ENCODE measurements at regions of chr19 and their contacts with region 1.

Region 1: GRCh38 chr19:34851353-34851752 is 75.3 kb upstream of the ZNF30 start:
- DNase-seq: peak; percentile 62 to 67
- H3K4me3 ChIP-seq: no peak overlapping the region
- H3K4me3 Mint-ChIP-seq: no peak overlapping the region
- H3K27ac Mint-ChIP-seq: no peak overlapping the region
- H3K4me1 ChIP-seq: no peaks in the 10 kb centered on the region
- H3K4me1 Mint-ChIP-seq: no peaks in the 10 kb centered on the region
- H3K27me3 ChIP-seq: no peaks in the 10 kb centered on the region
- H3K27me3 Mint-ChIP-seq: peaks cover 13% of the 10 kb centered on the region
- CTCF ChIP-seq: peak; percentile 39 to 53

Region 2: GRCh38 chr19:34926685-34927375 is 75.5 kb after region 1 on chr19 and contains the start of gene ZNF30:
- CTCF ChIA-PET with region 1: no interaction called
- POLR2A ChIA-PET with region 1: no interaction called
- intact Hi-C with region 1: loop called (anchors 5 kb)
- DNase-seq: peak; percentile 95 to 96
- H3K4me3 ChIP-seq: peak within 1 kb of the TSS; percentile 71
- H3K4me3 Mint-ChIP-seq: peak within 1 kb of the TSS; percentile 95
- H3K27ac Mint-ChIP-seq: peak within 1 kb of the TSS; percentile 86
- H3K4me1 ChIP-seq: peaks cover 6% of the 10 kb centered on the region; the same call in 1 of the 2 replicates
- H3K4me1 Mint-ChIP-seq: no peaks in the 10 kb centered on the region
- H3K27me3 ChIP-seq: no peaks in the 10 kb centered on the region
- H3K27me3 Mint-ChIP-seq: no peaks in the 10 kb centered on the region
- CTCF ChIP-seq: no peak
- total RNA-seq, gene ZNF30: 5.2 and 5.6 TPM in 2 replicates

Measured in Caco-2 (cell line).